Left cardiac atrium (tissue), 4 donors: ENCODE measurements at regions of chr4 and their contacts with region 1.

Region 1: GRCh38 chr4:16001484-16001858 is 38.5 kb upstream of the FGFBP2 start:
- DNase-seq: peak; percentile 58
- ATAC-seq: peak; percentile 91 to 93

Region 2: GRCh38 chr4:15805583-15806517 is 195.6 kb before region 1 on chr4:
- intact Hi-C with region 1: loop called in 1 of 2 experiments (anchors 10 kb)
- DNase-seq: no peak
- ATAC-seq: peak; percentile 76 to 82

Region 3: GRCh38 chr4:15882675-15883086 is 118.8 kb before region 1 on chr4:
- intact Hi-C with region 1: loop called (anchors 2 to 10 kb)
- DNase-seq: peak; percentile 40
- ATAC-seq: peak; percentile 82 to 83

Region 4: GRCh38 chr4:15963001-15963451 is 38.4 kb before region 1 on chr4 and contains the start of gene FGFBP2:
- intact Hi-C with region 1: loop called in 1 of 2 experiments (anchors 5 kb)
- DNase-seq: peak; percentile 29
- ATAC-seq: peak; percentile 79 to 93
- total RNA-seq, gene FGFBP2: 4.4 to 18.5 TPM